CD4-positive, alpha-beta T cell (primary cell): ENCODE measurements at regions of chr12 and their contacts with region 1.

Region 1: GRCh38 chr12:92259852-92260251 is 114.2 kb upstream of the BTG1 start:
- DNase-seq: no peak
- ATAC-seq: no peak
- H3K4me3 ChIP-seq: no peak overlapping the region
- H3K4me3 Mint-ChIP-seq: no peak overlapping the region
- H3K27ac ChIP-seq: no peak overlapping the region
- H3K27ac Mint-ChIP-seq: peak overlapping the region; percentile 46
- H3K4me1 ChIP-seq: peaks cover 2% of the 10 kb centered on the region
- H3K4me1 Mint-ChIP-seq: peaks cover 39% of the 10 kb centered on the region
- H3K27me3 ChIP-seq: no peaks in the 10 kb centered on the region
- H3K27me3 Mint-ChIP-seq: no peaks in the 10 kb centered on the region
- CTCF ChIP-seq: no peak

Region 2: GRCh38 chr12:91643763-91644162 is 616.1 kb before region 1 on chr12:
- CTCF ChIA-PET with region 1: no interaction called
- POLR2A ChIA-PET with region 1: no interaction called
- intact Hi-C with region 1: no loop called
- DNase-seq: no peak
- ATAC-seq: no peak
- H3K4me3 ChIP-seq: no peak overlapping the region
- H3K4me3 Mint-ChIP-seq: no peak overlapping the region
- H3K27ac ChIP-seq: no peak overlapping the region
- H3K27ac Mint-ChIP-seq: no peak overlapping the region
- H3K4me1 ChIP-seq: no peaks in the 10 kb centered on the region
- H3K4me1 Mint-ChIP-seq: no peaks in the 10 kb centered on the region
- H3K27me3 ChIP-seq: no peaks in the 10 kb centered on the region
- H3K27me3 Mint-ChIP-seq: no peaks in the 10 kb centered on the region
- CTCF ChIP-seq: no peak

Region 3: DNA sequence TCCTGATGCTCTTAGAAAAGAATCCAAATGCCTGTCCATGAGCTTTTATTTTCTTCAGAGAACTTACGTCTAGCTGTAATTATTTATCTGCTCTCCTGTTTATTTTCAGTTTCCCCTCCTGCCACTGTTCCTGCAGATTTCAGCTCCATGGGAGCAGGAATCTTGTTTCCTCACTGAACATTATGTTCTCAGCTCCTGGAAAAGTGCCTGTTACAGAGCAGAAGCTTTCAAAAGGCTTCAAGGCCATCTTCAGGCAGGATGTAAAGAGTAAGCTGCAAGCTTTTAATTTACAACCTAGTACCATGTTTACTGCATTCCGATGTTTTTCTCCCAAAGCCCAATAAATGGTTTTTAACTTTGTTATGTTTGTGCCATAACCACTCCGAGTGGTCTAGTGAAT is 15.8 kb before region 1 on chr12:
- CTCF ChIA-PET with region 1: interaction called, 3 read pairs
- POLR2A ChIA-PET with region 1: interaction called, 10 read pairs
- intact Hi-C with region 1: no loop called
- DNase-seq: no peak
- ATAC-seq: no peak
- H3K4me3 ChIP-seq: no peak overlapping the region
- H3K4me3 Mint-ChIP-seq: no peak overlapping the region
- H3K27ac ChIP-seq: no peak overlapping the region
- H3K27ac Mint-ChIP-seq: peak overlapping the region; percentile 0
- H3K4me1 ChIP-seq: no peaks in the 10 kb centered on the region
- H3K4me1 Mint-ChIP-seq: peaks cover 26% of the 10 kb centered on the region
- H3K27me3 ChIP-seq: no peaks in the 10 kb centered on the region
- H3K27me3 Mint-ChIP-seq: no peaks in the 10 kb centered on the region
- CTCF ChIP-seq: no peak